Activated B cell treated with CpG ODN at 0.5 μM for 24 hours (primary cell): ENCODE measurements at regions of chr2 and their contacts with region 1.

Region 1: GRCh38 chr2:218979846-218980734 is 4.9 kb downstream of the FEV start:
- DNase-seq: peak; percentile 78
- ATAC-seq: peak; percentile 93
- H3K4me3 Mint-ChIP-seq: peak overlapping the region; percentile 71
- H3K27ac Mint-ChIP-seq: no peak overlapping the region
- H3K4me1 Mint-ChIP-seq: peaks cover 28% of the 10 kb centered on the region
- H3K27me3 Mint-ChIP-seq: peaks cover 56% of the 10 kb centered on the region
- CTCF ChIP-seq: peak; percentile 78

Region 2: DNA sequence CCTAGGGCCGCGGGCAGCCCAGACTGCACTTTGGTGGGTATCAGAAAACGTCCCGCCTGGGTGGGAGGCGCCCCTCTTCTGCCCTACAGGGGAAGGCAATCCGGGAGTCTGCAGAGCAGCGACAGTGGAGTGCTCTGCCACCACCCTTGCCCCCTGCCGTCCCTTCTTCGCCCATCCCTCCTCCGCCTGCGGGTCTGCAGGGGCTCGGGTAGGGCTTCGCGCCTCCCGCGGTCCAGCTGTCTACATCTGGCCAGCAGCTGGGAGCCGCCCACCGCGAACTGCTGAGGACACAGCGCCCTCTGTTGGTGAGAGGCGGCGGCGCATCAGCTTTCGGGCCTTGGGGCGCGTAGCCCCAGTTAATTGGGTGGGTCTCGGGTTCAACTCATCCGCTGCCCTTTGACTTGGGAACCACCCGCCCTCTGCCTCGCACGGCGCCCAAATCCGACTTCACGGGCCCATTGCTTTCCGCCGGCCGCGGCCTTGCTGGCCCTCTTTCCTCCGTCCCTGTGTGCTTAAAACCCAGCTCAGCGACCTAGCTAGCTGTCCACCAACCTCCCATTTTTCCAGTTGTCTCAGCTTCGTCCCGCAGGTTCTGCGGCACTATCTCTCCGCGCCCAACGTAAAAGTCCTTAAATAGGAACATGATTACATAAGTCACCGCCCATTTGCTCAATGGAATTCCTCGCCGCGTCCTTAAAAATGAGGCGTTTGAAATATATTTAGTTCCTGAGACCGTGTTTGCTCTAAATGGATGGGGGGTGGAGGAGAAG is 81.8 kb before region 1 on chr2:
- CTCF ChIA-PET with region 1: interaction called, 10 read pairs
- POLR2A ChIA-PET with region 1: interaction called, 3 read pairs
- intact Hi-C with region 1: no loop called
- DNase-seq: peak; percentile 88
- ATAC-seq: peak; percentile 22
- H3K4me3 Mint-ChIP-seq: peak overlapping the region; percentile 85
- H3K27ac Mint-ChIP-seq: peak overlapping the region; percentile 84
- H3K4me1 Mint-ChIP-seq: peaks cover 47% of the 10 kb centered on the region
- H3K27me3 Mint-ChIP-seq: peaks cover 22% of the 10 kb centered on the region
- CTCF ChIP-seq: peak; percentile 97

Region 3: DNA sequence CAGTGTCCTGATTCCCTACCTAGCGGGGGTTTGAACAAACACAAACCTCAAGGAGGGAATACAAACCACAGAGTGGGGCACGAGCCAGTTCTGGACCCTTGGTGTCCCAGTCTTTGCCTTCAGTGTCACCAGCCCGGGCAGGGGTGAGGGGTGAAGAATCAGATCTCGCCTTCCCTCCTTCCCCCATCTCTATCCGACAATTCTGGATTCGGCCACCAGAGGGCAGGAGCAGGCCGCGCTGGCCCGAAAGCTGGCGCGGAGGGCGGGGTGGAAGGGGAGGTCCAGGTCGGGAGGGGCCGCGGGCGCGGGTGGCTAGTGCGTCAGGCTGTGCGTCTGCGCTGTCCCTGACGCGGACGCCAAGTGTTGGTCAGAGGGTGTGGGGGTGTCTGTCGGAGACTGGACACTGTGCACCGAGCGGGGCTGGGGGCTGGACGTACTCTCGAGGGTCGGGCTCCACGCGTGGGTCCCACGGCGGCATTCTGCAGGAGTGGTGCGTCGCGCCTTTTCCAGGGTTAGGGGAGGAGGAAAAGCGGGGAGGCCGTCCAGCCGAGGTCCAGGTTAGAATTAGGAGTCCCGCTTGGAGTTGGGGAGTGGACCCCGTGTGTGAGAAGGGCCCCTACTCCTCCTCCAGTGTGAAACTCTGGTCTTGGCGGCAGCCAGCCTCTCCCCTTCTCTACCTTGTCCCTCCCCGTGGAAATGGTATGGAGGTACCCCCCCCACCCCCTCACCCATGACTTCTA is 16.1 kb after region 1 on chr2:
- CTCF ChIA-PET with region 1: interaction called, 25 read pairs
- POLR2A ChIA-PET with region 1: no interaction called
- intact Hi-C with region 1: no loop called
- DNase-seq: peak; percentile 70
- ATAC-seq: peak; percentile 80
- H3K4me3 Mint-ChIP-seq: no peak overlapping the region
- H3K27ac Mint-ChIP-seq: no peak overlapping the region
- H3K4me1 Mint-ChIP-seq: peaks cover 16% of the 10 kb centered on the region
- H3K27me3 Mint-ChIP-seq: peaks cover 62% of the 10 kb centered on the region
- CTCF ChIP-seq: peak; percentile 49

Region 4: GRCh38 chr2:219119422-219120043 is 139.4 kb after region 1 on chr2:
- CTCF ChIA-PET with region 1: interaction called, 6 read pairs
- POLR2A ChIA-PET with region 1: no interaction called
- intact Hi-C with region 1: loop called (anchors 5 kb)
- DNase-seq: peak; percentile 27
- ATAC-seq: peak; percentile 50
- H3K4me3 Mint-ChIP-seq: no peak overlapping the region
- H3K27ac Mint-ChIP-seq: no peak overlapping the region
- H3K4me1 Mint-ChIP-seq: no peaks in the 10 kb centered on the region
- H3K27me3 Mint-ChIP-seq: no peaks in the 10 kb centered on the region
- CTCF ChIP-seq: no peak

Region 5: DNA sequence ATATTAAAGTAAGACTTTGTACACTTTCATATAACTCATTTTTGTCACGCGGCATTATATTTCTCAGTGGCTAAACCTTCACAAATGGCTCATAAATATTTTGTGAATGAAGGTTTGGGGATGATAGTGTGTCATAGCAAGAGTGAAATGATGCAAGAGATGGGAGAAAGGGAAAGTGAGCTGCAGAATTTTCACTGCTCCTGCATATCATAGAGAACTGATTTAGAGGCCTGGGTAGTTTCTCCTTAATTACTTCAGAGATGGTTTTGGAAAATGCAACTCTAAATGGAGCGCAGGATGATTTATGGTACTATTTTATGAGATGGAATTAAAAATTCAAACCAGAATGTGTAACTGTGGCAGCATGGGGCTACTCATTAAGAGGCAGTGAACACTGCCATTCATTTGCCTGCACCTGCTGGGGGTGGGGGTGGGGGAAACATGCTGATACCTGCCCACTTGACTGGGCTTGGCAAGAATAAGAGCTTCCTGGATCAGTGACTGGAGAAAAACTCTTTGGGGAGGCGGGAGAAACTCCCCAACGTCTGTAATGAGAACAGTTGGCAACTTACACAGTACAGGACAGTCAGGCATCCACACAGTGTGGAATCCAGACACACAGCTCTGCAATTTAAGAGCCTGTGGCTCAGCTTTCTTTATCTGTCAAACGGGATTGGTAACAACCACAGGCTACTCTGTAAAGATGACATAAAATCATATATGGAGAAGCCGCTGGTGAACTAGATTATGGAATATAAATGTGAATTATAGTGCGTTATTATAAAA is 1589.2 kb after region 1 on chr2:
- CTCF ChIA-PET with region 1: no interaction called
- POLR2A ChIA-PET with region 1: no interaction called
- intact Hi-C with region 1: no loop called
- DNase-seq: no peak
- ATAC-seq: no peak
- H3K4me3 Mint-ChIP-seq: no peak overlapping the region
- H3K27ac Mint-ChIP-seq: no peak overlapping the region
- H3K4me1 Mint-ChIP-seq: no peaks in the 10 kb centered on the region
- H3K27me3 Mint-ChIP-seq: no peaks in the 10 kb centered on the region
- CTCF ChIP-seq: no peak